Mammary epithelial cell (primary cell): ENCODE measurements at regions of chr22 and their contacts with region 1.

Region 1: GRCh38 chr22:20568989-20569769 is 61.8 kb downstream of the MED15 start:
- DNase-seq: peak; percentile 93
- H3K4me3 ChIP-seq: no peak overlapping the region
- H3K27ac ChIP-seq: peak overlapping the region; percentile 79
- H3K4me1 ChIP-seq: peaks cover 59% of the 10 kb centered on the region
- H3K27me3 ChIP-seq: no peaks in the 10 kb centered on the region
- CTCF ChIP-seq: no peak

Region 2: DNA sequence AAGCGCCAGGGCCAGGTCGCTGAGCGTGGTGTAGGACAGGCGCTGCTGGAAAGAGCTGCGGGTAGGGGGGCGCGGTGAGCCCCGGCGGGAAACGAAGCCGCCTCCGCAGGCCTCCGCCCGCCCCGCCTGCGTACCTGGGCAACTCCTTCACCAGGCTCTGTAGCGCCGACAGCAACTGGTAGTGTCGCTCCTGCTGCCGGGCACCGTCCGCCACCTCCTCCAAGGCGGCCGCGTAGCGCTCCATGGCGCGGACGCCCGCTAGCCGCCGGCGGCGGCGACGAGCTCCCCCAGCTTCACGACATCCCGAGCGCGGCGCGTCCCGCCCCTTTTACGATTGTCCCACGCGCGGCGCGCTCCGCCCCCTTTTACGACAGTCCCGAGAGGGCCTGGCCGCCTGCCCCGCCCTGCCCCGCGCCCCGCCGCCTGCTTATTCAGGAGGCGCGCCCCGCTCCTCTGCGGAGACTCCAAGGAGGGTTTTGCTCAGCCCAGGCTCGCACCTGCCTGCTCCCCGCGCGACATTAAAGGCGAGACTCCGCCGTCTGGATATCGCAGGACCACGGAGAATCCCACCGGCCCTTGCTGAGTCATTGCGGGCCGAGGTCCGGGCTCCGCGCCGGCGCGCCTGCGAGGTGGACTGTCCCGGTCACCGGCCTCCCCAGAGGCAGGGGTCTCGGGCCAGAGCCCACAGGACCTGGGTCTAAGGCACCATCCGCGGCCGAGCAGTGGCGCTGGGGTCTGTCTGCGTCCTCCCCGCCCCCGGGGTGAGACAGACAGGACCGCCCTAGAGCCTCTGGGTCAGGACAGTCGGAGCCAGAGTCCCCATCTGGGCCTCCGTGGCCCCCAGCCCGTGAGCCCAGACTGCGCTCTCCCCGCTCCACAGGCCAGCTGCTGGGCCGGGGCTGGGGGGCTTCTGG is 249.2 kb before region 1 on chr22 and contains the start of gene DGCR6L:
- CTCF ChIA-PET with region 1: no interaction called
- dilution Hi-C with region 1: no loop called
- in situ Hi-C with region 1: no loop called
- intact Hi-C with region 1: no loop called
- DNase-seq: peak; percentile 94
- H3K4me3 ChIP-seq: peak within 1 kb of the TSS; percentile 88 to 92 (median 91)
- H3K27ac ChIP-seq: peak within 1 kb of the TSS; percentile 60
- H3K4me1 ChIP-seq: peaks cover 13% of the 10 kb centered on the region
- H3K27me3 ChIP-seq: no peaks in the 10 kb centered on the region
- CTCF ChIP-seq: no peak
- total RNA-seq, gene DGCR6L: 28.7 to 40.8 TPM

Region 3: GRCh38 chr22:20405931-20406685 is 163.1 kb before region 1 on chr22:
- CTCF ChIA-PET with region 1: no interaction called
- dilution Hi-C with region 1: no loop called
- in situ Hi-C with region 1: no loop called
- intact Hi-C with region 1: no loop called
- DNase-seq: no peak
- H3K4me3 ChIP-seq: no peak overlapping the region
- H3K27ac ChIP-seq: no peak overlapping the region
- H3K4me1 ChIP-seq: no peaks in the 10 kb centered on the region
- H3K27me3 ChIP-seq: no peaks in the 10 kb centered on the region
- CTCF ChIP-seq: no peak

Region 4: DNA sequence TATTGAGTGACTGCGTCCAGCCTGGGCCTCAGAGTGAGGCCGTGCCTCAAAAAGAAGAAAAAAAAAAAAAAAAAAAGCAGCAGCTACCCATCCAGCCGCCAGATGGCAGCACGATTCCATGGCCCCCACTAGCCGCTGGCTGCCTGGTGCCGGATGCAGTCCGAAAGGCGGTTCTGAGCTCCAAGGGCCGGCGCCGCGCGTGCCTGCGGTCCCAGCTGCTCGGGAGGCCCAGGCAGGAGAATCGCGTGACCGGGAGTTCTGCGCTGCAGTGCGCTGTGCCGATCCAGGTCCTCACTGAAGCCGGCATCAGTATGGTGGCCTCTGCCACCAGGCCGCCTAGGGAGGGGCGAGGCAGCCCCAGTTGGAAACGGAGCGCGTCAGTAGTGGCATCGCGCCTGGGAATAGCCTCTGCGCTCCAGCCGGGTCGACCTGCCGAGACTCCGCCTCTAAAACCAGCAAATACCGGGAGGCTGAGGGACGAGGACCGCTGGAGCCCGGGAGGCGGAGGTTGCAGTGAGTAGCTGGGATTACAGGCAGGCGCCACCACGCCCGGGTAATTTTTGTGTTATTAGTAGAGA is 150.9 kb before region 1 on chr22:
- CTCF ChIA-PET with region 1: interaction called, 16 read pairs
- dilution Hi-C with region 1: no loop called
- in situ Hi-C with region 1: no loop called
- intact Hi-C with region 1: loop called (anchors 1 kb)
- DNase-seq: peak; percentile 49
- H3K4me3 ChIP-seq: peak overlapping the region in 2 of 3 experiments; percentile 51 to 60
- H3K27ac ChIP-seq: no peak overlapping the region
- H3K4me1 ChIP-seq: peaks cover 5% of the 10 kb centered on the region
- H3K27me3 ChIP-seq: no peaks in the 10 kb centered on the region
- CTCF ChIP-seq: peak; percentile 61 to 87

Region 5: GRCh38 chr22:20507253-20508066 is 61.7 kb before region 1 on chr22 and contains the start of gene MED15:
- CTCF ChIA-PET with region 1: interaction called, 3 read pairs
- dilution Hi-C with region 1: no loop called
- in situ Hi-C with region 1: no loop called
- intact Hi-C with region 1: loop called (anchors 1 kb)
- DNase-seq: peak; percentile 86
- H3K4me3 ChIP-seq: peak within 1 kb of the TSS; percentile 70 to 96 (median 84)
- H3K27ac ChIP-seq: peak within 1 kb of the TSS; percentile 87
- H3K4me1 ChIP-seq: peaks cover 44% of the 10 kb centered on the region
- H3K27me3 ChIP-seq: no peaks in the 10 kb centered on the region
- CTCF ChIP-seq: no peak
- total RNA-seq, gene MED15: 34.3 to 138 TPM

Region 6: DNA sequence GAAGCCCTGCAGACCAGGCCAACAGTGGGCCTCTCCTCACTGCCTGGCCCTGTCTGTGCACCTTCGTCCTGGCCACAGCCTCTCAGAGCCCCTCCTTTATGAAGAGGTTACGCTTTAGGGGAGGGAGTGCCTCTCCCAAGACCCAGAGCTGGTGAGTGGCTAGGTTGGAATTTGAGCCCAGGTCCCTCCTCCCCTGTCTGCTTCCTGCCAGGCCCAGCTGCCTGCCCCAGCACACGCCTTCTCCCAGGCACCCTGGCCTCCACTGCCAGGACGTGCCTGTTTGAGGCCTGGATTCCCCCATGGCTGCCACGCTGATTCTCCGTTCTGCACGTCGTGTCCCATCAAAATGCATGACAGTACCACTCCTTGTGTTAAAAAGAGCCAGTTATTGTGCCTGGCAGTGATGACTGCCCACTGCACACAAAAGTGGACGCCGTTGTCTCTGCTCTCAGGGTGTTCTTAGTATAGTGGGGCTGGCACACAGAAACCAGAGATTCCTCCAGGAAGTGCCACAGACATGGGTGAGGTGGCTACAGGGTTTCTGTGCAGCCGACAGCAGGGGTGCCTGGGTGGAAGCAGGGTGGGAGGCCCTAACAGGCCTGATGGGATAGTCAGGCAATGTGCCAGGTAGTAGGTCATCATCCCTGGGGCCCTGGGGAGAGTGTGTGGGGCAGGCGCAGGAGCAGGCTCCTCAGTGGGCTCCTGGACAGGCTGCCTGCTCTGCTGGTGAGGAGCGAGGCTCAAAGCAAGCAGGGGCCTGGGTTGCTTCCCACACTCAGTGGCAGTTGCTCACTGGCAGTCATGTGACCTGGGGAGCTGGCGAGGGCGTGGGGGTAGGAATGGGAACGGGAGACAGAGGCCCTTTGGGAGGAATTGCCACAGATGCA is 37.6 kb before region 1 on chr22:
- CTCF ChIA-PET with region 1: no interaction called
- dilution Hi-C with region 1: no loop called
- in situ Hi-C with region 1: no loop called
- intact Hi-C with region 1: loop called (anchors 1 kb)
- DNase-seq: peak; percentile 95
- H3K4me3 ChIP-seq: no peak overlapping the region
- H3K27ac ChIP-seq: peak overlapping the region; percentile 98
- H3K4me1 ChIP-seq: peaks cover 58% of the 10 kb centered on the region
- H3K27me3 ChIP-seq: no peaks in the 10 kb centered on the region
- CTCF ChIP-seq: no peak

Region 7: GRCh38 chr22:20606041-20606783 is 37.0 kb after region 1 on chr22:
- CTCF ChIA-PET with region 1: interaction called, 37 read pairs
- dilution Hi-C with region 1: no loop called
- in situ Hi-C with region 1: no loop called
- intact Hi-C with region 1: no loop called
- DNase-seq: peak; percentile 79
- H3K4me3 ChIP-seq: no peak overlapping the region
- H3K27ac ChIP-seq: no peak overlapping the region
- H3K4me1 ChIP-seq: peaks cover 6% of the 10 kb centered on the region
- H3K27me3 ChIP-seq: no peaks in the 10 kb centered on the region
- CTCF ChIP-seq: peak; percentile 78 to 95

Region 8: GRCh38 chr22:20741634-20742581 is 172.7 kb after region 1 on chr22:
- CTCF ChIA-PET with region 1: no interaction called
- dilution Hi-C with region 1: no loop called
- in situ Hi-C with region 1: no loop called
- intact Hi-C with region 1: loop called (anchors 5 kb)
- DNase-seq: peak; percentile 21
- H3K4me3 ChIP-seq: no peak overlapping the region
- H3K27ac ChIP-seq: no peak overlapping the region
- H3K4me1 ChIP-seq: no peaks in the 10 kb centered on the region
- H3K27me3 ChIP-seq: no peaks in the 10 kb centered on the region
- CTCF ChIP-seq: peak; percentile 73 to 75

Region 9: GRCh38 chr22:21044931-21045584 is 475.9 kb after region 1 on chr22:
- CTCF ChIA-PET with region 1: no interaction called
- dilution Hi-C with region 1: no loop called
- in situ Hi-C with region 1: no loop called
- intact Hi-C with region 1: no loop called
- DNase-seq: peak; percentile 25
- H3K4me3 ChIP-seq: peak overlapping the region in 1 of 3 experiments; percentile 32
- H3K27ac ChIP-seq: peak overlapping the region; percentile 33
- H3K4me1 ChIP-seq: peaks cover 24% of the 10 kb centered on the region
- H3K27me3 ChIP-seq: no peaks in the 10 kb centered on the region
- CTCF ChIP-seq: no peak